ENCODE measurements at regions of chr4 and their contacts with region 1.

Region 1: DNA sequence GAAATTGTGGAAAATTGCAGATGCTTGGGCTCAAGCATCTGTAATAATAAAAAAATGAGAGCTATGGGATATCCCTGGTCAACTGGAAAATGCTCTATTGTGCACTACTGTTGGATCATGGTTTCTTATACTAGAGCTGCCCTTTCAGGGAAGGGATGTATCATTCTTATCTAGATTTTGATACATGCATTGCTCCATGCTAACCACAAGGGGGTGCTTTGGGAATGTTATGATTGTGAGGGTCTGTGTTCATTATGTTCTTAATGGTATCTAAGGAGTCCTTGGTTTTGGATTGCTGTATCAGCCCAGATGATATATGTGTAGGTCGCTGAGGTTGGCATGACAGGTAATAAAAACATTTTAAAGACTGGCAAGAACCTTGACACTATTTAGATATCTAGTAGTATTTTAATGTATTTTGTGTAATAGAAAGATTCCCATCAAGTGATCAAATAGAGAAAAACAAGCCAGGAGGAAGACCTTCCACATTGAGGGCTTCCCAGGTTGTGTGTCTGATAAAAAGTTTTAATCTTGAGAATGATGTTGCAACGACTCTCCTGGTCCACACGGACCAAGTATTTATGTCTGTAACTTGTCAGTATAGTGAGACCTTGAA is 49.2 kb upstream of the TLR2 start:
- DNase-seq: no peak
- ATAC-seq: no peak
- H3K4me3 ChIP-seq: no peak overlapping the region
- H3K27ac ChIP-seq: no peak overlapping the region
- H3K4me1 ChIP-seq: no peaks in the 10 kb centered on the region
- H3K27me3 ChIP-seq: no peaks in the 10 kb centered on the region
- CTCF ChIP-seq: peak; percentile 37 to 58 (median 48)
- POLR2A ChIP-seq: no peak

Region 2: GRCh38 chr4:153741541-153741940 is 106.7 kb after region 1 on chr4:
- in situ Hi-C with region 1: loop called in 1 of 4 experiments (anchors 5 kb)
- intact Hi-C with region 1: no loop called
- DNase-seq: no peak
- ATAC-seq: no peak
- H3K4me3 ChIP-seq: no peak overlapping the region
- H3K27ac ChIP-seq: no peak overlapping the region
- H3K4me1 ChIP-seq: no peaks in the 10 kb centered on the region
- H3K27me3 ChIP-seq: no peaks in the 10 kb centered on the region
- CTCF ChIP-seq: no peak
- POLR2A ChIP-seq: no peak

Region 3: DNA sequence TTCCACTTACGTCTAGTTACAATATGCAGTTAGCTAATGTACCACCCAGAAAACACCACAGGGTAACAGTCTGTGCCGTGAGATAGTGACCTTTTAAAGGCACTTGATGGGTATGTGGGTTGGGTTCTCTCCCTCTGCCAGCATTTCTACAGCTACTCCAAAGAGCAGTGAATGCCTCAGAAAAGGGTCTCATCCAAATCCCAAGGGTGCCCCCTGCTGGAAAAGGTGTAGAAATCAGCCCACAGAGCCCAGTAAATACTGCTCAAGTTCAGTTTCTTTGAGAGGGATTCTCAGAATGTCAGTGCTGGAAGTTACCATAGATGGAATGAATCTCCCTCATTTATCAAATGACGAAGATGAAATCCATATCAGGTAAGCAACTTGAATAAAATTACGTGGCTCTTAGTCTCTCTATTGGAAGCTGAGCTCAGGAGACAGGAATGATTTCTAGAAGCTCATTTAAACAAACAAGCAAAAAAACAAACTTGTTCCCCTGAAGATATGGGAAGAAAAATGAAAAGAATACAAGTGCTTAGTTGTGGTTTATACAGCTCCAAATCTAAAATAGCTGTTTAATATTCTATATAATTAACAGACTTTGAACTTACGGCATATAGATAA is 115.5 kb after region 1 on chr4:
- in situ Hi-C with region 1: loop called in 1 of 4 experiments (anchors 5 kb)
- intact Hi-C with region 1: loop called (anchors 5 kb)
- DNase-seq: peak; percentile 21 to 26
- ATAC-seq: peak; percentile 58 to 75
- H3K4me3 ChIP-seq: no peak overlapping the region
- H3K27ac ChIP-seq: no peak overlapping the region
- H3K4me1 ChIP-seq: no peaks in the 10 kb centered on the region
- H3K27me3 ChIP-seq: peaks cover 0 to 4% (median 0%) of the 10 kb centered on the region in 3 donors
- CTCF ChIP-seq: peak in 4 of 5 experiments; percentile 18 to 49 (median 40)
- POLR2A ChIP-seq: no peak